Heart left ventricle (tissue), 16 donors: ENCODE measurements at regions of chr18 and their contacts with region 1.

Region 1: DNA sequence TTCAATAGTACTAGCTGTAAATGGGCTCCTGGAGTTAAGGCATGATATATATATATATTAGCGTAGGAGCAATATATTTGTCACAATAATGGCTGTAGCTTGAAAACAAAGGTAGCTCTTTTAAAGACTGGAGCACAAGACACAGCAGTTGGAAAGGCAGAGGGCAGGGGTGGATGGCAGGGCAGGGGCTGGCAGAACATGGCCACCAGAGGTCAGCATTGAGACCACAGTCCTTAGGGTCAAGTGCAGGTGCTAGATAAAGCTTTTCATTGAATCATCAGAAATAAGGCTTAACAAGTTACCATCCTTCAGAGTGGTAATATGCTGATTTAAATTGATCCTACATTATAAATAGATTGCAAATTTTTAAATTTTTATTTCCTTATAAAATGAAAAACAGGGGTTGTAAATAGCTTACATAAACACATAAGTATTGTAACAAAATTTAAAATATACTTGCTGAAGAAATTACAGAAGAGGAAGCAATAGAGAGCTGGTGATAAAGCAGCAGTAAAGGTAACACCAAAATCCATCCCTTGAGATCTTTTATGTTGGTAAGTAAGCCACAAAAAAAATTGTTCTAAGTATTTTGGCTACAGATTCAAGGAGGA is 161.2 kb upstream of the PIEZO2 start:
- DNase-seq: peak in 3 of 5 donors; percentile 25 to 39 (median 31)
- ATAC-seq: peak in 3 of 4 donors; percentile 64 to 83 (median 76)
- H3K4me3 ChIP-seq: no peak overlapping the region
- H3K27ac ChIP-seq: no peak overlapping the region
- H3K4me1 ChIP-seq: no peaks in the 10 kb centered on the region
- H3K27me3 ChIP-seq: no peaks in the 10 kb centered on the region
- CTCF ChIP-seq: peak; percentile 40 to 71 (median 61)
- POLR2A ChIP-seq: no peak

Region 2: DNA sequence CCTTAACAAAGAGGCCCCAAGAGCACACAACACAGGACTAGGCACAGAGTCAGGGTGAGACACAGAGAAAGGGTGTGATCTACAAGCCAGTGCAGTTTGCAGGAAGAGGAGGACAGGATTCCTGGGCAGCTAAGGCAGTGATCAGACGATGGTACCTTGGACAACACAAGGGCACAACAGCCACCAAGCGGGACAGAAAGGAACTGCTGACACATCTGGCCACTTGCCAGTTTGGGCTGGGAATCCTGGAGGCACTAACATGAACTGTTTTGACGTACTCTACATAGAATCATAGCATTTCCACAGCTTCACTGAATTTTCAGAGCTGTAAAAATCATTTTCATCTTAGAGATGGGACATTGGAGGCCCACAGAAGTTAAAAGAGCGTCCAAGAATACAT is 77.3 kb after region 1 on chr18:
- intact Hi-C with region 1: loop called in 8 of 10 experiments (anchors 2 to 5 kb)
- DNase-seq: peak; percentile 61 to 79 (median 74)
- ATAC-seq: peak in 3 of 4 donors; percentile 79 to 87 (median 81)
- H3K4me3 ChIP-seq: no peak overlapping the region
- H3K27ac ChIP-seq: no peak overlapping the region
- H3K4me1 ChIP-seq: no peaks in the 10 kb centered on the region
- H3K27me3 ChIP-seq: no peaks in the 10 kb centered on the region
- CTCF ChIP-seq: peak in 11 of 12 donors; percentile 38 to 65 (median 50)
- POLR2A ChIP-seq: no peak

Region 3: GRCh38 chr18:11480692-11481091 is 170.1 kb after region 1 on chr18:
- intact Hi-C with region 1: no loop called
- DNase-seq: no peak
- ATAC-seq: no peak
- H3K4me3 ChIP-seq: no peak overlapping the region
- H3K27ac ChIP-seq: no peak overlapping the region
- H3K4me1 ChIP-seq: no peaks in the 10 kb centered on the region
- H3K27me3 ChIP-seq: no peaks in the 10 kb centered on the region
- CTCF ChIP-seq: no peak
- POLR2A ChIP-seq: no peak

Region 4: GRCh38 chr18:11518788-11519685 is 208.5 kb after region 1 on chr18:
- intact Hi-C with region 1: loop called in 3 of 10 experiments (anchors 10 kb)
- DNase-seq: peak in 2 of 5 donors; percentile 42 to 67
- ATAC-seq: peak in 3 of 4 donors; percentile 48 to 69 (median 65)
- H3K4me3 ChIP-seq: no peak overlapping the region
- H3K27ac ChIP-seq: no peak overlapping the region
- H3K4me1 ChIP-seq: peaks cover 0 to 5% (median 0%) of the 10 kb centered on the region in 12 donors
- H3K27me3 ChIP-seq: no peaks in the 10 kb centered on the region
- CTCF ChIP-seq: peak; percentile 30 to 64 (median 52)
- POLR2A ChIP-seq: no peak

Region 5: DNA sequence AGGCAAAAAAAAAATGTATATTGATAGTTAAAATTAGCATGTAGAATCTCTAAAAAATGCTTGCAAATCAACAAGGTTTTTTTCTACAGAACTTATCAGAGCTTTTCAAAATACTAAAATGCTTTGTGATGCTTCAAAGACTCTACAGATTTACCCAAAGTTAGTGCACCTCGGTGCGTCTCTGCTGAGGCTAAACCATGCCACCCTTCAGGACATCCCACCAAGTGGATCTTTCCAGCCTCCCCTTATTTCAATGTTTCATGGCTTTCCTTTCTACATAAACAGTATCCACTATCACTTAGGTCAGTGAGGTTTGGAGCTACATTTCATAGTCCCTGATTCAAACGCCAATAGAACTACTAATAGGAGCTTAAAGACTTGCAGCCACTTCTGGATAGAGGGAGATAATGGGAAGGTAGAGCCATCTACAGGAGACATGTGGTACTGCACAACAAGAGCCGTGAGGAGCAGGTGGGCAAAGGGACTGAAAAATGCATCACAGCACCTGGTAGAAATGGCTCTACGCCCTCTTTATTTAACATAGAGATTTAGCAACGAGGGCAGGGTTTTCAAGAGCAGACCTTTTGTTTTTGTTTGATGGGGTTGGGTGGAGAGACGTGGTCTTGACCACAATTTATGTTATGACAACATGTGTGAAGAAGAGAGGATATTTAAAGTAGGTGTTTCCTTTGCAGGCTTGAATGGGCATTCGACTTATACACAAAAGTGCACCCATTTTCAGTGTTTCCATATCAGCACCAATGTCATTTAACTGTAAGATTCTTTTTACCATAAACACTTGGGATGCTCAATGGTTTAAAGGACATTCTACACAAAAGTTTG is 242.7 kb after region 1 on chr18:
- intact Hi-C with region 1: loop called in 2 of 10 experiments (anchors 5 kb)
- DNase-seq: no peak
- ATAC-seq: peak; percentile 55 to 75 (median 64)
- H3K4me3 ChIP-seq: no peak overlapping the region
- H3K27ac ChIP-seq: no peak overlapping the region
- H3K4me1 ChIP-seq: no peaks in the 10 kb centered on the region
- H3K27me3 ChIP-seq: peaks cover 0 to 11% (median 0%) of the 10 kb centered on the region in 9 donors
- CTCF ChIP-seq: peak; percentile 80 to 92 (median 86)
- POLR2A ChIP-seq: no peak